Stomach (tissue), 19 donors: ENCODE measurements at regions of chr17 and their contacts with region 1.

Region 1: DNA sequence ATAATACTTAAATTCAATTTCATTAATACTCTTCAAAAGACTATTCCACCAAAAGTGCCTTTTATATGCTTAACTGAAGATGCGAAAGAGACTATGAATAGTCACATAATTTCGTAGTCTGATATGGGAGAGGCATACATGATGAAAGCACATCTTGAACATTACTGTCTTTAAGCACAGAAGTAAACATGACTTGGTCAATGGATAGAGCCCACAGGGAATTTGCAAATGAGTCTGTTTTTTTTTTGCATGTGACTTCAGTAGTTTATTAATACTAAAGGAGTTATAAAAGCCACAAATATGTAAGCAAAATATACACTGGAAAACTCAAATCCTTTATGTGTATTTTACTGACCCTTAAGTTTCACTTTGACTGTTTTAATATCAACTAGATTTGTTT is 15.9 kb downstream of the ADPRM start:
- DNase-seq: no peak
- H3K4me3 ChIP-seq: no peak overlapping the region
- H3K27ac ChIP-seq: no peak overlapping the region
- H3K4me1 ChIP-seq: no peaks in the 10 kb centered on the region
- H3K27me3 ChIP-seq: no peaks in the 10 kb centered on the region
- CTCF ChIP-seq: no peak
- EP300 ChIP-seq: no peak
- POLR2A ChIP-seq: no peak

Region 2: DNA sequence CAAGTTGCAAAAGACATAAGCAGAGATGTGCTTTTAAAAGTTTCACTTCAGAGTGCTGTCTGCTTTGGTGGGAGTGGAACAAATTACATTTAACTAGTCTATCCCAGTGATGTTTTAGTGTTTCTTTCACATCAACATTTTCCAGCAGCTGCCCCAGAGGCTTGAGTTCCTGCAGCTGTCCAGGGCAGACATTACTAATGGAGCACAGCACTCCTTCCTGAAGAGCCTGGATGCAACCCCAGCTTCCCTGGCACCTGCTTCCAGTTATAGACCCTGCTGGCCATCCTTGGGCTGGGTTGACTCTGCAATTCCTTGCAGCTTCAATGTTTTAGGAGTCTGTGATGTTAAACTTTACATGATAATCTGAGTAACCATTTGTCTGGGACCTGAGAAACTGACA is 186.0 kb after region 1 on chr17:
- intact Hi-C with region 1: no loop called
- DNase-seq: no peak
- H3K4me3 ChIP-seq: no peak overlapping the region
- H3K27ac ChIP-seq: no peak overlapping the region
- H3K4me1 ChIP-seq: no peaks in the 10 kb centered on the region
- H3K27me3 ChIP-seq: no peaks in the 10 kb centered on the region
- CTCF ChIP-seq: no peak
- EP300 ChIP-seq: no peak
- POLR2A ChIP-seq: no peak

Region 3: DNA sequence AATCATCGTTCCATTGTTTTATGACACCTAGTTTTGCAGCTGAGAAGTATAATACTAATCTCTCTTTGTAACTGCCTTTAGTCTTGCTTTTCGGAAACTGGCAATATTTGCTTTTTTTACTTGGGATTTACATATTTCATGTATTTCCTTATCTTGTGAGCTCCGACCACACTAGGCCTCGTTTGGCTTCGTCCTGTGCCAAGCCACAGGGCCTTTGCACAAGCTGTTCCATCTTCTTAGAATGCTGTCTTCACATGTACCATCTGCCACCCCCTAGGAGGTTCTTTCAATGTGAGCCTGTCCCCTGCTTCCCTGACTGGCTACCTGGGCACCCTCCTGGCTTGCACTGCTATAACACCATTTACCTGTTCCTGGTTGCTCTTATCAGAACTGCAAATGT is 604.9 kb after region 1 on chr17:
- intact Hi-C with region 1: loop called (anchors 5 kb)
- DNase-seq: no peak
- H3K4me3 ChIP-seq: no peak overlapping the region
- H3K27ac ChIP-seq: no peak overlapping the region
- H3K4me1 ChIP-seq: peaks cover 0 to 7% (median 2%) of the 10 kb centered on the region in 4 donors
- H3K27me3 ChIP-seq: no peaks in the 10 kb centered on the region
- CTCF ChIP-seq: no peak
- EP300 ChIP-seq: no peak
- POLR2A ChIP-seq: no peak